Gastrocnemius medialis (tissue), 4 donors: ENCODE measurements at regions of chrX and their contacts with region 1.

Region 1: DNA sequence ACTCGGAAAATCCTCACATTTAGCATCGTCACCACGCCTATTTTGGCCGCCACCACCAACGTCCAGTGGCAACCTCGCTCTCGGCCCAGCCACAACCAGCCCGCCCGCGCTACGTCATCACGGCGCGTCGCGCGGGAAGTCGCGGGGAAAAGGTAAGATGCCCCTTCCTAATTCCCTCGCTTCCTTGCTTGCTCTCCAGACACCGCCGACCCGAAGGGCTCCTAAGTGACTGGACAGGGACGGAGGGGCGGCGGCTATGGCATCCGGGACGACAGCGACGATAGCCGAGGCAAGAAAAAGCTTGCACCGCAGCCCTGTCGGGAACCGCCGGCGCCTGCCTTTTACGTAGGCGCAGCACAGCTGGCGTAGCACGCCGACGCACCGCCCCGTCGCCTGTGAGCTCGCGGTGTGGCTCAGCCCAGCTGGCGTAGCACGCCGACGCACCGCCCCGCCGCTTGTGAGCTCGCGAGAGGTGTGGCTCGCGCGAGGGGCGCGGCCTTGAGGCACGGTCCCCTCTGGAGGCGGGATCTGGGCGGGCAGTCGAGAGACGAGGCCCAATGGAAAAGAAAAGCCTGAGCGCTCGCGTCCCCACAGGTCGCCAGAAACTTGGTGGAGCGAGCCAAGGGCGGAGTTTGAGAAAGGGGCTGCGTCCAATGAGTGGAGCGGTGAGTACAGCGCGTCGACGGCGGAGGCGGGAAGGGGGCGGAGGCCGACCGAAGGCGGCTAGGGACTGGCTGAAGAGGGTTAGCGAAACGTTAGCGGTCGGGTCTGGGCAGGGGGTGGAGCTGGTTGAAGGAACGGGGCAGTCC is at the start of gene HDAC6:
- DNase-seq: peak; percentile 93 to 98
- ATAC-seq: peak; percentile 85 to 87
- H3K4me3 ChIP-seq: peak within 1 kb of the TSS; percentile 65 to 74 (median 72)
- H3K27ac ChIP-seq: peak within 1 kb of the TSS; percentile 90 to 99 (median 96)
- H3K4me1 ChIP-seq: peaks cover 5 to 6% of the 10 kb centered on the region in 2 donors
- H3K27me3 ChIP-seq: no peaks in the 10 kb centered on the region
- CTCF ChIP-seq: no peak
- POLR2A ChIP-seq: peak in 1 of 2 donors; percentile 6
- total RNA-seq, gene HDAC6: 38.2 to 92.2 (median 61.3) TPM

Region 2: GRCh38 chrX:48143646-48144045 is 657.8 kb before region 1 on chrX:
- in situ Hi-C with region 1: no loop called
- intact Hi-C with region 1: no loop called
- DNase-seq: no peak
- ATAC-seq: no peak
- H3K4me3 ChIP-seq: no peak overlapping the region
- H3K27ac ChIP-seq: no peak overlapping the region
- H3K4me1 ChIP-seq: no peaks in the 10 kb centered on the region
- H3K27me3 ChIP-seq: no peaks in the 10 kb centered on the region
- CTCF ChIP-seq: no peak
- POLR2A ChIP-seq: no peak

Region 3: DNA sequence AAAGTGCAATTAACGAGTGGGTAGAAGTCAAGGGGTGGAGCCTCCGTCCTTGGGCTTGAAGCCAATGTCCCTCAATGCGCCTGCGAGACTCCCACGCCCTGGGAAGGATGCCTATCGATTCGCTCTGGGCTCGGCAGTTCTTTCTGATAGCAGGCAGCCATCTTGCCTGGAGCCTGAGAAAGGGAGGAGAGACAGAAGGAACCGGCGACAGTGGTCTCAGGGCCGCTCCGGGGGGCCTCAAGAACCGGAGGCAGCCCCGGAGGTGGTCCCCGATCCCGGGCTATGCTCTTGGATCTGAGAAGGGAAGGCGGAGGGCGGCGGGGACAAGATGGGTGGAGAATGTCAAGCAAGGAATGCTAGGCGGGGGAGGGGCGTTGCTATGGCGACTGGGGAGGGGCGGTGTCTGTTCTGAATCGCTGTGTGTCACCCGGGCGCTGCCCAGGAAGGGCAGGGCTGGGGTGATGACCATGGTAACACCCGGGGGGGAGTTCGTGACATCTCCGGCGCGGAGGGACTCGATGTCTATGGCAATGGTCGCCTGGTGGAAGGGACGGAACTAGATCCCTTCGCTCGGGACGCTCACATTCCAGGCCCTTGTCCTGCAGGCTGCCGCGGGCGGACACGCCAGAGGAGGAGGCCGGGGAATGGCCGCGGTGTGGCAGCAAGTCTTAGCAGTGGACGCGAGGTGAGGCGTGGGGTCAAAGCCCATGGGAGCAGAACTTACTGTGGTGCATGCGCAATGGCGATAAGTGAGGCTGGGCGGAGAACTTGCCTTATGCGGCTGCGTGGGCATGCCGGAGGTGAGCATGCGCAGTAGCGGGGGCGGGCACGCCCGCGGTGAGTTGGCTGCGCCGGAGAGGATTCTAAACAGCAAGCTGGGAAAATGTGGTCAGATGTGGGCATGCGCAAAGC is 203.9 kb before region 1 on chrX and contains the start of gene WDR13:
- in situ Hi-C with region 1: no loop called
- intact Hi-C with region 1: loop called (anchors 5 kb)
- DNase-seq: peak; percentile 82 to 90
- ATAC-seq: peak; percentile 92 to 97
- H3K4me3 ChIP-seq: peak within 1 kb of the TSS; percentile 75 to 85 (median 84)
- H3K27ac ChIP-seq: peak within 1 kb of the TSS; percentile 89 to 99 (median 96)
- H3K4me1 ChIP-seq: peaks cover 3 to 4% of the 10 kb centered on the region in 2 donors
- H3K27me3 ChIP-seq: no peaks in the 10 kb centered on the region
- CTCF ChIP-seq: no peak
- POLR2A ChIP-seq: peak; percentile 56 to 61
- total RNA-seq, gene WDR13: 82.7 to 143 (median 133) TPM

Region 4: DNA sequence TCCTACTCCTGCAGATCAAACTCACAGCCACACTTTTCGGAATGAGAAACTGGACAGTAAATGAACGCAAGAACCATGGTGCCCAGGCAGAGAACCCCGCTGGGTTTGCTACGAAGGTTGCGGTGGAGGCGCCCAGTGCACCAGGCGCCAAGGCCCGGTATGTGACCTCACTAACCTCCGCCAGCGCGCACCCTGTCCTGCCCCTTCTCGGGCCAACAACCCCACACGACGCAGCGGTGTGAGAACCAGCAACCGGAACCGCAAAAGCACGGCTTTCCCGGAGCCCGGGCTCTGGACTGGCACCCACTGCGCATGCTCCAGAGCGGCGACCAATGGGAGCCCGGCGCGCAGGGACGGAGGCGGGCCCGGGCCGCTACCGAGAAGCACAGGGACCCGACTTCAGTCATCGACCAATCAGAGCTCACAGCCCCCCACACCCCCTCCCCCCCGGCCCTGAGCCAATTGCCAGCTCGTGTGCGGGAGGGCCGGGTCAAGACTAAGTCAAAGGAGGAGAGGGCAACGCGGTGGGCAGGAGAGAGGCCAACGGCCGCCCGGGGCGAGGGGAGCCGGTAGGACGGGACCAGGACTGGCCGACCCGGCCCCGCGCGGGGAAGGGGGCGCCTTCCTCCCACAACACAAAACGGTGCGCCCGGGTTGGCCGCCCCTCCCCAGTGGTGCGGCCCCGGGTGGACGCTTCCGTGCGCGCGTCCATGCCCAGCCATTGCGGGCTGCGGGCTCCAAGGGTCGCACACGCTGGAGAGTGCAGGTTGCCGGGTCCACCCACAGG is 125.2 kb before region 1 on chrX:
- in situ Hi-C with region 1: loop called in 1 of 4 experiments (anchors 25 kb)
- intact Hi-C with region 1: loop called (anchors 5 kb)
- DNase-seq: peak; percentile 84 to 90
- ATAC-seq: peak; percentile 94 to 98
- H3K4me3 ChIP-seq: peak overlapping the region; percentile 67 to 77 (median 72)
- H3K27ac ChIP-seq: peak overlapping the region; percentile 86 to 95 (median 90)
- H3K4me1 ChIP-seq: no peaks in the 10 kb centered on the region
- H3K27me3 ChIP-seq: no peaks in the 10 kb centered on the region
- CTCF ChIP-seq: no peak
- POLR2A ChIP-seq: peak; percentile 53 to 68

Region 5: GRCh38 chrX:48747415-48748016 is 54.0 kb before region 1 on chrX:
- in situ Hi-C with region 1: loop called in 1 of 4 experiments (anchors 10 kb)
- intact Hi-C with region 1: no loop called
- DNase-seq: no peak
- ATAC-seq: no peak
- H3K4me3 ChIP-seq: no peak overlapping the region
- H3K27ac ChIP-seq: no peak overlapping the region
- H3K4me1 ChIP-seq: no peaks in the 10 kb centered on the region
- H3K27me3 ChIP-seq: no peaks in the 10 kb centered on the region
- CTCF ChIP-seq: no peak
- POLR2A ChIP-seq: no peak

Region 6: GRCh38 chrX:48972220-48973167 is 171.0 kb after region 1 on chrX:
- in situ Hi-C with region 1: no loop called
- intact Hi-C with region 1: no loop called
- DNase-seq: peak in 1 of 2 donors; percentile 17
- ATAC-seq: peak in 1 of 2 donors; percentile 50
- H3K4me3 ChIP-seq: peak overlapping the region; percentile 14 to 37 (median 23)
- H3K27ac ChIP-seq: peak overlapping the region in 2 of 4 donors; percentile 34 to 42
- H3K4me1 ChIP-seq: no peaks in the 10 kb centered on the region
- H3K27me3 ChIP-seq: no peaks in the 10 kb centered on the region
- CTCF ChIP-seq: peak in 4 of 5 experiments; percentile 19 to 56 (median 30)
- POLR2A ChIP-seq: no peak

Region 7: DNA sequence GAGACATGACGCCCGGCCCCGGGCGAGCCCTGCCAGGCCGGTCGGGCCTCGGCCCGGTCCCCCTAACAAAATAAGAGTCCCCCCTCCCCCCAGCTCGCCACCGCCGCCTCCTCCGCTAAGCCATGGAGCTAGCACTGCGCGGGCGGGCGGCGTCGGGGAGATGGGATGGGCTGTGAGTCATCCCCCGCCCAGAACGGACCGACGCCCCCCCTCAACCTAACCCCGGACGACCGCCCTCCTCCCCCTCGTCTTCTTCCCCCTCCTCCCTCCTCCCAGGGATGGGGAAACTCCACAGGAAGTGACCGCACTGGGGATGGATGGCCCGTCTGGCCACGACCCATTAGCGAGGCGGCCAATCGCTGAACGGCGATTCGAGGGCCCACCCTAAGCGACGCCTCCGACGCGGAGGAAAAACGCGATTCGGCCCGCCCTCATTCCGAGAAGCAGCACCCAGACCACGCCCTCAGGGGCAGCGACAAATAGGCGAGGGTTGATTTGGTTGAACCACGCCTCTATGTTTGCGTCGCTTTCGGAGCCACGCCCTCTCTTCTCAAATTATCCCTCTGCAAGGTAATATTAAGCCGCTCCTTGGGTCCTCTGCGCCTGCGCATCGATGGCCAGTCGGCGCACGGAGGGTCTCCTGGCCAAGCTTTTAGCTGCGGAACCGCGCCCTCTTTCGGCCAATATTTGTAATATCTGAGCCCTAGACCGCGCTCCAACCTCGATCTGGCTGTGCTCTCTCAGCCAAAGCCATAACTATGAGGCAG is 241.9 kb after region 1 on chrX and contains the start of gene TFE3:
- in situ Hi-C with region 1: no loop called
- intact Hi-C with region 1: loop called (anchors 5 kb)
- DNase-seq: peak; percentile 97 to 99
- ATAC-seq: peak; percentile 90 to 93
- H3K4me3 ChIP-seq: peak within 1 kb of the TSS; percentile 76 to 87 (median 79)
- H3K27ac ChIP-seq: peak within 1 kb of the TSS; percentile 93 to 100 (median 98)
- H3K4me1 ChIP-seq: peaks cover 9% of the 10 kb centered on the region in 2 donors
- H3K27me3 ChIP-seq: no peaks in the 10 kb centered on the region
- CTCF ChIP-seq: peak; percentile 41 to 64 (median 63)
- POLR2A ChIP-seq: peak; percentile 72 to 76
- total RNA-seq, gene TFE3: 29.3 to 44.5 (median 34.7) TPM

Region 8: GRCh38 chrX:49269010-49269767 is 467.7 kb after region 1 on chrX:
- in situ Hi-C with region 1: no loop called
- intact Hi-C with region 1: loop called (anchors 5 kb)
- DNase-seq: peak; percentile 96 to 98
- ATAC-seq: peak; percentile 89 to 95
- H3K4me3 ChIP-seq: peak overlapping the region; percentile 57 to 69 (median 60)
- H3K27ac ChIP-seq: peak overlapping the region; percentile 77 to 93 (median 92)
- H3K4me1 ChIP-seq: peaks cover 9 to 10% of the 10 kb centered on the region in 2 donors
- H3K27me3 ChIP-seq: no peaks in the 10 kb centered on the region
- CTCF ChIP-seq: no peak
- POLR2A ChIP-seq: peak in 1 of 2 donors; percentile 35